Endothelial cell of umbilical vein (primary cell): ENCODE measurements at regions of chr10 and their contacts with region 1.

Region 1: DNA sequence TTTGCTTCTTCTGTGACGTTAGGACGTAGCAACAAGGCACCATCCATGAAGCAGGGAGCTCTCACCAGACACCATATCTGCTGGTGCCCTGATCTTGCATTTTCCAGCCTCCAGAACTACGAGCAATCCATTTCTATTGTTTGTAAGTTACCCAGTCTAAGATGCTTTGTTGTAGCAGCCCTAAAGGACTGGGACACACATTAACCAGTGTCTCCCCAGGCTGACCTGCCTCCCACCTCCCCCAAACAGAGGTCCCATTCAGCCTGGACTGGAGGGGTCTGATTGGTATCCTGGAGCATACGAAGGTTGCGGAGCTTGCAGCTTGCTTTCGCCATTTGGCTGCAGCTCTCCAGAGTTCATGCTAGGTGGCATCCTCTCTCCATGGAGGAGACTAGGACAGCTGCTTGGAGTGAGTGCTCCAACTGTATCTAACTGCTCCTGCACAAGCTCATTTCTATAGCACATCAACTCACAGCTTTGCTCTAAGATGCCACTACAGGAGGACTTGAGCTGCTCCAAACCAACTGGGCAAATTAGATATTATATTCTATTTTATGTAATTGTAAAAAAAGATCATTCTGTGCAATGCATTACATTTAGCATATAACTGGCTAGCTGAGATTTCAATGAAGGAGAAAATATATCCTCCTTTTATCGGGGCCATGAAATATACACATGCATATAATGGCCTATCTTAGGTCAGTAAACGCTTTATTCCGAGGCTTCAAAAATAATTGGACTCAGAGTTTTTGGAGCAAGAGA is 8.0 kb upstream of the GRK5 start:
- DNase-seq: peak; percentile 82
- H3K4me3 ChIP-seq: no peak overlapping the region
- H3K27ac ChIP-seq: no peak overlapping the region
- H3K4me1 ChIP-seq: peaks cover 31% of the 10 kb centered on the region
- H3K27me3 ChIP-seq: no peaks in the 10 kb centered on the region
- CTCF ChIP-seq: peak; percentile 78 to 81
- POLR2A ChIP-seq: no peak

Region 2: GRCh38 chr10:119041326-119041725 is 158.1 kb before region 1 on chr10:
- CTCF ChIA-PET with region 1: no interaction called
- POLR2A ChIA-PET with region 1: no interaction called
- dilution Hi-C with region 1: no loop called
- intact Hi-C with region 1: no loop called
- DNase-seq: no peak
- H3K4me3 ChIP-seq: no peak overlapping the region
- H3K27ac ChIP-seq: no peak overlapping the region
- H3K4me1 ChIP-seq: no peaks in the 10 kb centered on the region
- H3K27me3 ChIP-seq: no peaks in the 10 kb centered on the region
- CTCF ChIP-seq: no peak
- POLR2A ChIP-seq: no peak

Region 3: DNA sequence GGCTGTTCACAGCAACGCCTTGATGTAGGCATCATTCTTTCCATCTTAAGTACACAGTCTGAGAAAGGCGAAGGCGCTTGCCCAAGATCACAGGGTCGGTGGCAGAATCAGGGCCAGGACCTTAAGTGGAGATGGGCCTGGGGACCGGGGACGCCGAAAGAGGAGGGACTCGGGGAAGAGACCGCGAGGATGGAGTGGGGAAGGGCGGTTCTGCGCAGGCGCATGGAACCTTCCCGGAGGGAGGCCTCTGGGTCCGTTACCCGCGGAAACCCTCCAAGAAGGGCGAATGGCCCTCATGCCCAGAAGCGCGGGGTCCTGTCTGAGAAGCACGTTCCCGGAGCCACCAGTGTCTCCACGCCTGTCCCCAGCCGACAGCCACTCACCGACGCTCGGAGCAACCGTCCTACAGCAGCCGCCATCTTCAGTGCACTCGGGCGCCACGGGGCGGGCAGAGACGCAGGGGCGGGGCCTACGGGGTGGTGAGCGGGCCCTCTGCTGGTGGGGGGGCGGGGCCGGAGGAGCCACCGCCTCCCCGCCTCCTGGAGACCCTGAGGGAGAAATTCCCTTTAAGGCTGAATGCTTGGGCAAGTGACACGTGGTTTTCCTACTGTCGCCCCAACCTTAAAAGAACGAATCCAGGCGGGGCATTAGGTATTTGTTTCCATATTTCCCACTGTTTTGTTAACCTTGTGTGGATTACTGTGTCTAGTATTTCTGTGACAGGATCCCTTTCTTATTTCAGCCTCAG is 20.9 kb before region 1 on chr10 and contains the start of gene PRDX3:
- CTCF ChIA-PET with region 1: interaction called, 12 read pairs
- POLR2A ChIA-PET with region 1: interaction called, 3 read pairs
- dilution Hi-C with region 1: no loop called
- intact Hi-C with region 1: loop called (anchors 2 kb)
- DNase-seq: peak; percentile 94
- H3K4me3 ChIP-seq: peak within 1 kb of the TSS; percentile 85 to 91 (median 87)
- H3K27ac ChIP-seq: peak within 1 kb of the TSS; percentile 83
- H3K4me1 ChIP-seq: peaks cover 12% of the 10 kb centered on the region
- H3K27me3 ChIP-seq: no peaks in the 10 kb centered on the region
- CTCF ChIP-seq: peak in 1 of 2 donors; percentile 22
- POLR2A ChIP-seq: peak; percentile 99
- total RNA-seq, gene PRDX3: 117 and 124 TPM in 2 replicates

Region 4: DNA sequence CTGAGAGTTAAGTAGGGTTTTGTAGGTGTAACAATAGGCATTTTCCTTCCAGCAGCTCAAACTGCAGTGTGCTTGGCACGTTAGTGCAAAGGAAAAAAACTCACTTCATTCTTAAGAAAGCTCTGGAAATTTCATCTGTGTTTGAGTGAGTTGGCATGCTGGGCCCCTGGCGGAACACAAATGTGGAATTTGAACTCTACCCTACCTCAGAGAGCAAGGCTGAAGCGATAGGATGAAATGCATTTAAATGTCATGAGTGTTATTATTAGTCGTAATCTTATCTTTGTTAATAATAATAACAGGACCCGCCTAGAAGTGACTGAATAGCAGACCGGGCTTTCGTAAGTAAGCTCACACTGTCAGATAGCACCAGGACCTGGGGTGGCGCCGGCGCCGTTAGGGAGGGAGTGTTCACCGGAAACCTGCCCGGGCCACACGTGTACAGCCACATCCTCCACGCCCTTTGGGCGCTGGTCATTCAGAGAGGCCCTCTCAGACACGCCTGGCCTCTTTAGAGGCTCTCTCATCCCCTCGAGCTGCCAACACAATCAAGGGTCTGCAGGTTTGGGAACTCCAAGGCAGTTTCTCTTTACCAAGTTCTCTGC is 71.5 kb after region 1 on chr10:
- CTCF ChIA-PET with region 1: interaction called, 20 read pairs
- POLR2A ChIA-PET with region 1: interaction called, 3 read pairs
- dilution Hi-C with region 1: no loop called
- intact Hi-C with region 1: no loop called
- DNase-seq: no peak
- H3K4me3 ChIP-seq: no peak overlapping the region
- H3K27ac ChIP-seq: peak overlapping the region; percentile 77
- H3K4me1 ChIP-seq: peaks cover 34% of the 10 kb centered on the region
- H3K27me3 ChIP-seq: no peaks in the 10 kb centered on the region
- CTCF ChIP-seq: no peak
- POLR2A ChIP-seq: peak; percentile 56

Region 5: DNA sequence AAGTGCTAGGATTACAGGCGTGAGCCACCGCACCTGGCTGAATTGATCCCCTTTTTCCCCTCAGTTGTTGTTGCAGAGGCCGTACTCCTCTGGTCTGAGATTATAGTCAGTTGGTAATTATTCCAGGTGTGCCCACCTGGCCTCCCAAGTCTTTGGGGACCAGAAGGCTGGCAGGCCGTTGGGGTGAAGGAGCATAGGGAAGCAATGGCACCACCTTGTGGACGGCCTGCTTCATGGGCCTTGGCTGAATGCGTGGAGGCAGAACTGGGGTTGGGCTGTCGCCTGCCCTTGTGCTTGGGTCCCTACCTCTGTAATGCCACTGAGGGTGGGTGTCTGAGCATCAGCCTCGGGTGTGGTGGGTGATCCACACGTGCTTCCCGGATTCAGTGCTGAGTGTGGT is 217.4 kb after region 1 on chr10:
- CTCF ChIA-PET with region 1: interaction called, 59 read pairs
- POLR2A ChIA-PET with region 1: no interaction called
- dilution Hi-C with region 1: no loop called
- intact Hi-C with region 1: loop called (anchors 1 kb)
- DNase-seq: peak; percentile 52
- H3K4me3 ChIP-seq: no peak overlapping the region
- H3K27ac ChIP-seq: no peak overlapping the region
- H3K4me1 ChIP-seq: peaks cover 4% of the 10 kb centered on the region
- H3K27me3 ChIP-seq: no peaks in the 10 kb centered on the region
- CTCF ChIP-seq: peak; percentile 68 to 88
- POLR2A ChIP-seq: no peak

Region 6: GRCh38 chr10:119445311-119445934 is 246.0 kb after region 1 on chr10:
- CTCF ChIA-PET with region 1: interaction called, 245 read pairs
- POLR2A ChIA-PET with region 1: interaction called, 3 read pairs
- dilution Hi-C with region 1: no loop called
- intact Hi-C with region 1: loop called (anchors 1 kb)
- DNase-seq: peak; percentile 57
- H3K4me3 ChIP-seq: no peak overlapping the region
- H3K27ac ChIP-seq: no peak overlapping the region
- H3K4me1 ChIP-seq: no peaks in the 10 kb centered on the region
- H3K27me3 ChIP-seq: no peaks in the 10 kb centered on the region
- CTCF ChIP-seq: peak; percentile 78 to 96
- POLR2A ChIP-seq: no peak

Region 7: GRCh38 chr10:119542988-119543813 is 343.8 kb after region 1 on chr10:
- CTCF ChIA-PET with region 1: interaction called, 69 read pairs
- POLR2A ChIA-PET with region 1: no interaction called
- dilution Hi-C with region 1: no loop called
- intact Hi-C with region 1: loop called (anchors 1 kb)
- DNase-seq: peak; percentile 48
- H3K4me3 ChIP-seq: peak overlapping the region; percentile 65 to 81 (median 67)
- H3K27ac ChIP-seq: no peak overlapping the region
- H3K4me1 ChIP-seq: peaks cover 6% of the 10 kb centered on the region
- H3K27me3 ChIP-seq: peaks cover 3 to 4% of the 10 kb centered on the region in 2 experiments
- CTCF ChIP-seq: peak; percentile 48 to 67
- POLR2A ChIP-seq: peak; percentile 13

Region 8: DNA sequence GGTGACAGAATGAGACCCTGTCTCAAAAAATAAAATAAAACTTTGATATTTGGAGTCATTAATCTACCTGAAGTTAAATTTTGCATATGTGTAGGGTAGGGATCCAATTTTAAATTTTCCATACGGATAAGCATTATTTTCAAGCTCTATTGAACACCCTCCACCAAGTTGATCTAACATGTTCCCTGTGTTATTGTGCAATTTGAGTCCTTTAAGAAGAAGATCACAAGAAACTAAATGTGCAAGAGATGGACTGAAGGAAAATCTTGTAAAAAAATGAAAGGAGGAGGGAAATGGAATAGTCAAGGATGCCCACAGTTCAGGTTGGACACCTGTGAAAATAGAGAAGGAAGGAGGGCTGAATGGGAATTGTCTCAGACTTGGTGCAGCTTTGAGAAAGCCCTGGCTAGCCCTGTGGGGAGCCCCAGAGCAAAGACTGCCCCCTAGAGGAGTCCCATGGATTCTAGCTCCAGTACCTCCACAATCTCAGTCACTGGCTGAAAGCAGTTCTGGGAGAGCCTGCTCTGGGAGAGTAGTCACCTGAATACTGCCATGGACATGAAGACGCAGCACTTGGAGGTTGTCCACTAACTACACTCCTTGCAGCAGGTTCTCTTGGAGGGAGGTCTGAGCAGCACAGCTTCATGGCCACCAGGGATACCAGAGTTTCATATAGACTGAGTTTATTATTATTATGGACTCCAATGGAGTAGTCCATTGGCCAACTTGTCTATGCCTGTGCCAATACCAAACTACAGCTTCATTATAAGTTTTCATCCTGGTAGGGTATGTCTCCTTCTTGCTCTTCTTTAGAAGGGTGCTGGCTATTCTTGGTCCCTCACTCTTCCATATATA is 403.1 kb after region 1 on chr10:
- CTCF ChIA-PET with region 1: interaction called, 31 read pairs
- POLR2A ChIA-PET with region 1: no interaction called
- dilution Hi-C with region 1: no loop called
- intact Hi-C with region 1: loop called (anchors 2 kb)
- DNase-seq: peak; percentile 38
- H3K4me3 ChIP-seq: no peak overlapping the region
- H3K27ac ChIP-seq: no peak overlapping the region
- H3K4me1 ChIP-seq: peaks cover 5% of the 10 kb centered on the region
- H3K27me3 ChIP-seq: no peaks in the 10 kb centered on the region
- CTCF ChIP-seq: peak; percentile 63 to 84
- POLR2A ChIP-seq: no peak